T-cell (primary cell): ENCODE measurements at regions of chr7 and their contacts with region 1.

Region 1: DNA sequence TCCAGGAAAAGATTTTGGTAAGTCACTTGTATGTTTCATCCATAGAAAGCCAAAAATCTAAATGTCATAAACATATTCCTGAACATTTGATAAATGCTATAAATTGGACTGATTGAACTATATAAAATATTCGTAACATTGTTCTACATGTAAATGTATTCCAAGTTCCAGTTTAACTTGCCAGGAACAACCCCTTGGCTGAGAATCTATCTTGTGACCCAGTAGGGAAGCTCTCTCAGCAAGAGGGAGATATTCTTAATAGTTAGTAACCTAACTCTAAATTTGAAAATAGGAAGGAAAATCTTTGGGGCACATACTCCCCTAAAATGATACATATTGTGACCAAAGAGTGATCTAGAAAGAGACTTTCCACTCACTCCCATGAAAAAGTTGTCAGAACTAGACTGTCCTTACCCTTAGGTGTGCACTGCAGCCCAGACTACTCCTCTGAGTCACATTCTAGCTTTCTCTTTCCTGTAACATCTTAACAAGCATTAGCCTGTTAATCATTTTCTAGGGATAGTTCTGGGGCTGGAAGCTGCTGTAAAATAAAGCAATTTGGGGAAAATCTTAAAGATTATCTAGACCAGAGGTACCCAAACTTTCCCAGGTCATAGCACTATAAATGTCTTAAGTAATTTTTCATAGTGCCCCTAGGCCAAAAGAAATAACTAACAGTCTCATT is 73.7 kb upstream of the SKAP2 start:
- DNase-seq: no peak
- ATAC-seq: no peak
- H3K4me3 ChIP-seq: no peak overlapping the region
- H3K4me3 Mint-ChIP-seq: no peak overlapping the region
- H3K27ac ChIP-seq: no peak overlapping the region
- H3K27ac Mint-ChIP-seq: no peak overlapping the region
- H3K4me1 ChIP-seq: no peaks in the 10 kb centered on the region
- H3K4me1 Mint-ChIP-seq: no peaks in the 10 kb centered on the region
- H3K27me3 ChIP-seq: no peaks in the 10 kb centered on the region
- H3K27me3 Mint-ChIP-seq: peaks cover 6 to 18% of the 10 kb centered on the region in 2 donors

Region 2: DNA sequence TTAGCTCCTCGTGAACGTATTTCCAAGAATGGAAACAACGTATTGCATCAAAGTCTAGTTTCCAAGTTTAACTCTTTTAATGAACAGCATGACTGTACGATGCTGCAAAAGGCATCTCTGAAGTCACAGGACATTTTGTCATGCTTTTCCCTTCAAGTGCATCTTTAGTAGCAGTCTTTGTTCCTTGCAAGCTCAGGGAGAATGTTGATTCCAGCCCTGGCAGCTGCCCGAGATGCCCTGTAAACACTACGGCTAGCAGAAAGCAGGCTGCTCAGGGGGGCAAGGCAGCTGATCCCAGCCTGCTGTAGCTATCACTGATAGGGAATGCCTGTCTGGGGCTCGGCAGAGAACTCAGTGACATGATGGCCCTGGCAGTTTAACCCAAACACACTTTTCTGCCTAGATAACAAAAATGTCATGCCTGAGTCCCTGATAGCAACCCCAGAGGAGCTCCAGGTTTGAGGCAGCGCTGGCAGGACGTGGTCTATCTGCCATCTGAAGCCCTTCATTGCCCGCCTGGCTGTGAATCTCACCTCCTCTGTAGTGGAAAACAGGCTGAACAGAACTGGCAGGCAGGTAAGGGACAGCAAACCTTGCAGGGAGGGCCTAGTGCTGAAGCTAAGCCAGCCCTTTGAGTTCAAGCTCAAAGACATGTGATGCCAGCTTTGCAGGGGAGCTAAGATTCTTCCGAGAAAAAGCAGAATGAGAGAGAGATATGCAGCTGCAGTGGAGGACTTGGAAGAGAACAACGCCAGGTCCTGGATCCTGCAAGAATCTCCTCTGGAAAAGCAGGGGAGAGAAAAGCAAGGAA is 381.8 kb before region 1 on chr7:
- CTCF ChIA-PET with region 1: interaction called in 1 of 2 experiments, 16 read pairs
- POLR2A ChIA-PET with region 1: no interaction called
- DNase-seq: no peak
- ATAC-seq: no peak
- H3K4me3 ChIP-seq: no peak overlapping the region
- H3K4me3 Mint-ChIP-seq: no peak overlapping the region
- H3K27ac ChIP-seq: no peak overlapping the region
- H3K27ac Mint-ChIP-seq: no peak overlapping the region
- H3K4me1 ChIP-seq: no peaks in the 10 kb centered on the region
- H3K4me1 Mint-ChIP-seq: no peaks in the 10 kb centered on the region
- H3K27me3 ChIP-seq: no peaks in the 10 kb centered on the region
- H3K27me3 Mint-ChIP-seq: peaks cover 10 to 13% of the 10 kb centered on the region in 2 donors